Activated CD4-positive, alpha-beta memory T cell treated with anti-CD3 and anti-CD28 coated beads for 36 hours (primary cell): ENCODE measurements at regions of chr3 and their contacts with region 1.

Region 1: DNA sequence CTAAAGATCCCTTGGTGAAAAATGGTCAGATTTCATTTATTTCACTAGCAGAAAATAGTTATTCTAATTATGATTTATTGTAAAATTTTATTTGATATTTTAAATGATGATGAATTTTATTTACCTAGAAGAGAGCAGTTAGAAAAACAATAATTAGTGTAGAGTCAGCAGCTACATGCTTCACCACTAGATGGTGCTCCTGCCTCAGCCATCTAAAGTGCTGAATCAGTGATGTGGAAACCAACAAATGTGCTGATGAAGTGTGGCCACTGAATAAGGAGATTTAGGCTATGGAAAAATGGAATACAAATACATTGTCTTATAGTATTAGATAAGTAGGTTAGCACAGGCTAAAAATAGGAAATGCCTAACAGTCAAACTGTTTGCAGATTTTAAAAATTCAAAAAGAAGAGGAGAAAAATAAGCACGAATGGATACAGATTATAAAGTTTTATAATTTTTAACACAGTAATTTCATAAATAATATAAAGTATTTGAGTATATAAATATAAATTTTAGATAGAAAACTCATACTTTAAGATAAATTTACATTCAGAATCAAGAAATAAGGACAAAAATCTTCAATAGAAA is 109.8 kb downstream of the PPP2R3A start:
- DNase-seq: peak; percentile 82
- H3K4me3 Mint-ChIP-seq: no peak overlapping the region
- H3K27ac Mint-ChIP-seq: no peak overlapping the region
- H3K4me1 Mint-ChIP-seq: peaks cover 2% of the 10 kb centered on the region
- H3K27me3 Mint-ChIP-seq: no peaks in the 10 kb centered on the region

Region 2: GRCh38 chr3:136250226-136250902 is 175.1 kb after region 1 on chr3 and contains the start of gene PCCB:
- CTCF ChIA-PET with region 1: interaction called, 9 read pairs
- POLR2A ChIA-PET with region 1: no interaction called
- intact Hi-C with region 1: loop called (anchors 1 kb)
- DNase-seq: peak; percentile 95
- H3K4me3 Mint-ChIP-seq: peak within 1 kb of the TSS; percentile 86
- H3K27ac Mint-ChIP-seq: peak within 1 kb of the TSS; percentile 88
- H3K4me1 Mint-ChIP-seq: peaks cover 18% of the 10 kb centered on the region
- H3K27me3 Mint-ChIP-seq: no peaks in the 10 kb centered on the region
- total RNA-seq, gene PCCB: 54.5 to 58.9 TPM

Region 3: GRCh38 chr3:136390574-136390973 is 315.3 kb after region 1 on chr3:
- CTCF ChIA-PET with region 1: interaction called, 10 read pairs
- POLR2A ChIA-PET with region 1: no interaction called
- intact Hi-C with region 1: loop called (anchors 1 kb)
- DNase-seq: no peak
- H3K4me3 Mint-ChIP-seq: no peak overlapping the region
- H3K27ac Mint-ChIP-seq: no peak overlapping the region
- H3K4me1 Mint-ChIP-seq: peaks cover 1% of the 10 kb centered on the region
- H3K27me3 Mint-ChIP-seq: no peaks in the 10 kb centered on the region

Region 4: DNA sequence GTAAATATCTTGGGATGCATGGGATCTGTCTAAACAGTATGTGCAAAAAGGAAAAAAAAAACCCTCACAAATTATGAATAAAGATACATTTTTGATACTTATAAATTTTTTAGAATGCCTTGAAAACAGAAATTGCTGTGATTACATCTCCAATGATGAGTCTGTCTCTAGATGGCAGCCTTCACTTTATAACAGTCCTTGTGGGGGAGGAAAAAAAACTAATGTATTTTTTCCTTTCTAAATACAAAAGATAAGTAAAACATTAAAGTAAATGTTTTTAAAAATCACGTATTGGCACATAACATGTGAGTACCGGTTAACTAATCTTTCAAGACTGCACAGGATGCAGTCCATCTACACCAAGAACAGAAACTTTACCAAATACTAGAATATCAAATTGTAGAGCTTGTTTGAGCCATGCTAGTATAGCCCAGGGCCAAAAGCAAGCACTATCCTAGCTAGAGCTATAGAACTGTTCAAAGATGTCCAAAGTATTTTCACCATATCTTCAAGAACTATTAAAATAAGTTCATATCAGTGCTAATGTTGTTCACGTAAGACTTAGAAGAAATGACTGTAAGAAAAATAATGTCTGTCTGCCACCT is 470.5 kb after region 1 on chr3:
- CTCF ChIA-PET with region 1: no interaction called
- POLR2A ChIA-PET with region 1: no interaction called
- intact Hi-C with region 1: loop called (anchors 10 kb)
- DNase-seq: no peak
- H3K4me3 Mint-ChIP-seq: no peak overlapping the region
- H3K27ac Mint-ChIP-seq: no peak overlapping the region
- H3K4me1 Mint-ChIP-seq: peaks cover 23% of the 10 kb centered on the region
- H3K27me3 Mint-ChIP-seq: no peaks in the 10 kb centered on the region

Region 5: DNA sequence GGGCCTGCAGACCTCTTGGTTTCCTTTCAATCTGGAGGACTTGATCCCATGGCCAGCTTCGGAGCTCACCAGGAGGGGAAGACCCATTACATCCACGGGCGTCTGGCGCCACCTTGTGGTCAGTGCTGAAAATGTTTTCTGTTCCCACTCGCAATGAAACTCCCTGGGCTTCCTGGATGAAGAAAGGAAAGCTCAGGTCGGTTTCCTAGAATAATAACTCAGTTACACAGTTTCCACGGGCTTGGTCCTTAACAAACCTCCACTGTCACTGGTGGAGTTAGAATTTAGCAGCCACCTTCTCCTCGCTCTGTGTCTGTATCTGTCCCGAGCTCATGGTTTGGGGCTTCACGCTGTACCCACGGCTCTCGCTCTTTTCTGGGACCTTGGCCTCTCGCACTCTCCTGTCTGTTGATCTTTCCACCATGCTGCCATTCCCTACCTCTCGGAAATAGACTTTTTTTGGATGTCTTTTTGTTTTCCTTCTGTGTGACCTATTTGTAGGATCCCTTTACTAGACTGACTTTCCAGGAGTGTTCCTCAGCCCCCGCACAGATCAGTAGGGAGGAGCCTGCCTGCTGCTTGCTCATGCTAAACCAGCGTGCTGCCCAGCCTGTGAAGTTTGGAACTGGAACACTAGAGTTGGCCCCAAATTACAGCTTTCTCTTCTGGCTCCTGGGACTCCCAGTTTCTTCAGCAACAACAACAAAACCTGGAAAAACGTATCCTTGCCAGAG is 938.8 kb after region 1 on chr3:
- CTCF ChIA-PET with region 1: interaction called, 30 read pairs
- POLR2A ChIA-PET with region 1: no interaction called
- intact Hi-C with region 1: loop called (anchors 1 kb)
- DNase-seq: peak; percentile 89
- H3K4me3 Mint-ChIP-seq: peak overlapping the region; percentile 55
- H3K27ac Mint-ChIP-seq: no peak overlapping the region
- H3K4me1 Mint-ChIP-seq: peaks cover 7% of the 10 kb centered on the region
- H3K27me3 Mint-ChIP-seq: no peaks in the 10 kb centered on the region

Region 6: GRCh38 chr3:137105277-137105977 is 1030.1 kb after region 1 on chr3:
- CTCF ChIA-PET with region 1: interaction called, 3 read pairs
- POLR2A ChIA-PET with region 1: no interaction called
- intact Hi-C with region 1: loop called (anchors 10 kb)
- DNase-seq: no peak
- H3K4me3 Mint-ChIP-seq: no peak overlapping the region
- H3K27ac Mint-ChIP-seq: no peak overlapping the region
- H3K4me1 Mint-ChIP-seq: no peaks in the 10 kb centered on the region
- H3K27me3 Mint-ChIP-seq: peaks cover 9% of the 10 kb centered on the region